Heart left ventricle (tissue), 16 donors: ENCODE measurements at regions of chr12 and their contacts with region 1.

Region 1: DNA sequence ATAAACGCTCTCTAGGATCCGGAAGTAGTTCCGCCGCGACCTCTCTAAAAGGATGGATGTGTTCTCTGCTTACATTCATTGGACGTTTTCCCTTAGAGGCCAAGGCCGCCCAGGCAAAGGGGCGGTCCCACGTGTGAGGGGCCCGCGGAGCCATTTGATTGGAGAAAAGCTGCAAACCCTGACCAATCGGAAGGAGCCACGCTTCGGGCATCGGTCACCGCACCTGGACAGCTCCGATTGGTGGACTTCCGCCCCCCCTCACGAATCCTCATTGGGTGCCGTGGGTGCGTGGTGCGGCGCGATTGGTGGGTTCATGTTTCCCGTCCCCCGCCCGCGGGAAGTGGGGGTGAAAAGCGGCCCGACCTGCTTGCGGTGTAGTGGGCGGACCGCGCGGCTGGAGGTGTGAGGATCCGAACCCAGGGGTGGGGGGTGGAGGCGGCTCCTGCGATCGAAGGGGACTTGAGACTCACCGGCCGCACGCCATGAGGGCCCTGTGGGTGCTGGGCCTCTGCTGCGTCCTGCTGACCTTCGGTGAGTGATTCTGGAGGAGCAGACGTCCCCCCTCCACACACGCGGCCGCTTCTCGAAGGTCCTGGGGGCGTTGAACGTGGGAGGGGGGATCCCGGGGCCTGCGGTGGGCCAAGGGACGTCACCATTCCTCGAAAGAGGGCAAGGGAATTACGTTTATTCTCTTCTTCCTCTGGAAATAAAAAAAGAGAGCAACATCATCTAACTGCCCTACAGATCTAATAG is at the start of gene HSP90B1:
- DNase-seq: peak; percentile 99 to 100 (median 100)
- ATAC-seq: peak; percentile 91 to 96 (median 93)
- H3K4me3 ChIP-seq: peak within 1 kb of the TSS; percentile 71 to 95 (median 86)
- H3K27ac ChIP-seq: peak within 1 kb of the TSS; percentile 87 to 99 (median 94)
- H3K4me1 ChIP-seq: peaks cover 10 to 58% (median 41%) of the 10 kb centered on the region in 12 donors
- H3K27me3 ChIP-seq: no peaks in the 10 kb centered on the region
- CTCF ChIP-seq: no peak
- POLR2A ChIP-seq: peak; percentile 83 to 98
- total RNA-seq, gene HSP90B1: 166 to 518 (median 337) TPM

Region 2: DNA sequence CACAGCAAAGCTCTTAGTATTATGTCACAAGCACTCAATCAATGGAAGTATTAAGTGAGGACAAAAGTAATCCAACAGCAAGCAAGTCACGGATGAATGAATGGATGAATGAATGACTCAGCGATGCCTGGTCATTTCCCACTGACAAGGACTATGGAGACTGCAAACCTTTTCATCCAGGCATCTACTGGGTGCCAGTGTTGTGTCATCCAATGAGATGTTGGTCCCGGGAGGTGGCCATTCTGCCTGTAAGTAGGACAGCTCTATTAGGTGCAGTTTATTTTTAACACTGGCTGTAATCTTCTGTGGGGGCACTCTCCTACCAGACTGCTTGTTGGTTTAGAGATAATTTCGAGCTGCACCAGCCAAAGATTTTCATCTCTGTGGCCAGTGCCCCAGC is 303.7 kb before region 1 on chr12:
- intact Hi-C with region 1: loop called in 2 of 10 experiments (anchors 2 to 5 kb)
- DNase-seq: peak in 4 of 5 donors; percentile 63 to 77 (median 68)
- ATAC-seq: peak; percentile 79 to 91 (median 83)
- H3K4me3 ChIP-seq: no peak overlapping the region
- H3K27ac ChIP-seq: peak overlapping the region in 11 of 12 donors; percentile 37 to 82 (median 68)
- H3K4me1 ChIP-seq: peaks cover 0 to 19% (median 7%) of the 10 kb centered on the region in 12 donors
- H3K27me3 ChIP-seq: no peaks in the 10 kb centered on the region
- CTCF ChIP-seq: peak in 7 of 12 donors; percentile 25 to 70 (median 38)
- POLR2A ChIP-seq: no peak

Region 3: GRCh38 chr12:103858953-103859601 is 71.1 kb before region 1 on chr12:
- intact Hi-C with region 1: no loop called
- DNase-seq: peak; percentile 30 to 76 (median 39)
- ATAC-seq: peak; percentile 83 to 95 (median 90)
- H3K4me3 ChIP-seq: no peak overlapping the region
- H3K27ac ChIP-seq: peak overlapping the region in 8 of 12 donors; percentile 12 to 92 (median 47)
- H3K4me1 ChIP-seq: peaks cover 0 to 7% (median 0%) of the 10 kb centered on the region in 12 donors
- H3K27me3 ChIP-seq: no peaks in the 10 kb centered on the region
- CTCF ChIP-seq: no peak
- POLR2A ChIP-seq: no peak

Region 4: GRCh38 chr12:103884316-103884715 is 45.9 kb before region 1 on chr12:
- intact Hi-C with region 1: loop called in 2 of 10 experiments (anchors 5 kb)
- DNase-seq: no peak
- ATAC-seq: no peak
- H3K4me3 ChIP-seq: no peak overlapping the region
- H3K27ac ChIP-seq: no peak overlapping the region
- H3K4me1 ChIP-seq: peaks cover 0 to 13% (median 0%) of the 10 kb centered on the region in 12 donors
- H3K27me3 ChIP-seq: no peaks in the 10 kb centered on the region
- CTCF ChIP-seq: peak in 9 of 12 donors; percentile 10 to 55 (median 32)
- POLR2A ChIP-seq: no peak

Region 5: DNA sequence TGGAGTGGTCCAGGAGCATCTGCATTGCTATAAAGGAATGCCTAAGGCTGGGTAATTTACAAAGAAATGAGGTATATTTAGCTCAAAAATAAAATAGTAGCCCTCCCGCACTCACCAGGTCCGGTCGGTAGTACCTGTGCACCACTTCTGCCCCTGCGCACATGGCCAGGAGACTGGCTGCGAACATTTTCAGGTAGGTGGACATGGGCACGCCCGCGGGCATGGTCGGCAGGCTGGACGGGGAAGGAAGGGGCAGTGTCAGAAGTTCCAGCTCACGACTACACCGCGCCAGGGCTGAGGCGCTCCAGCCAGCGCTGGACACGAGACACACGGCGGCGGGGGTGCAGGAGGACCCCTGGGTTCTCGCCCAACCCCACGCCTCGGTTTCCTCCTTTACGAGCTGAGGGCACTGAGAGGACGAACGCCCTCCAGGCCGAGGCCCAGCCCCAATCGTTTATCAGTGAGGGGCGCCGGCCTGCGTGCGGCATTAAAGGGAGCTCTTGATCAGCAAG is 26.4 kb after region 1 on chr12:
- intact Hi-C with region 1: loop called in 4 of 10 experiments (anchors 1 to 2 kb)
- DNase-seq: peak in 1 of 5 donors; percentile 68
- ATAC-seq: peak; percentile 25 to 57 (median 46)
- H3K4me3 ChIP-seq: peak overlapping the region; percentile 53 to 90 (median 80)
- H3K27ac ChIP-seq: peak overlapping the region; percentile 84 to 98 (median 95)
- H3K4me1 ChIP-seq: peaks cover 7 to 31% (median 20%) of the 10 kb centered on the region in 12 donors
- H3K27me3 ChIP-seq: no peaks in the 10 kb centered on the region
- CTCF ChIP-seq: no peak
- POLR2A ChIP-seq: no peak

Region 6: GRCh38 chr12:103965590-103966504 is 35.6 kb after region 1 on chr12 and contains the start of gene TDG:
- intact Hi-C with region 1: loop called in 2 of 10 experiments (anchors 5 kb)
- DNase-seq: peak; percentile 98 to 99 (median 99)
- ATAC-seq: peak; percentile 98 to 99 (median 99)
- H3K4me3 ChIP-seq: peak within 1 kb of the TSS; percentile 74 to 99 (median 84)
- H3K27ac ChIP-seq: peak within 1 kb of the TSS; percentile 73 to 98 (median 96)
- H3K4me1 ChIP-seq: peaks cover 4 to 63% (median 51%) of the 10 kb centered on the region in 12 donors
- H3K27me3 ChIP-seq: no peaks in the 10 kb centered on the region
- CTCF ChIP-seq: peak in 3 of 12 donors; percentile 11 to 36 (median 29)
- POLR2A ChIP-seq: peak; percentile 4 to 92
- total RNA-seq, gene TDG: 7.8 to 15.5 (median 13.1) TPM

Region 7: GRCh38 chr12:104064031-104064822 is 134.0 kb after region 1 on chr12 and contains the start of gene HCFC2:
- intact Hi-C with region 1: loop called in 1 of 10 experiments (anchors 2 kb)
- DNase-seq: peak; percentile 93 to 96 (median 95)
- ATAC-seq: peak; percentile 98 to 99 (median 99)
- H3K4me3 ChIP-seq: peak within 1 kb of the TSS; percentile 66 to 99 (median 89)
- H3K27ac ChIP-seq: peak within 1 kb of the TSS; percentile 78 to 95 (median 88)
- H3K4me1 ChIP-seq: peaks cover 0 to 31% (median 21%) of the 10 kb centered on the region in 12 donors
- H3K27me3 ChIP-seq: no peaks in the 10 kb centered on the region
- CTCF ChIP-seq: peak in 1 of 12 donors; percentile 8
- POLR2A ChIP-seq: peak in 1 of 2 donors; percentile 62
- total RNA-seq, gene HCFC2: 7.1 to 14.0 (median 9.3) TPM